ENCODE measurements at regions of chr5 and their contacts with region 1.

Region 1: GRCh38 chr5:66122379-66123034 is 21.6 kb upstream of the SREK1 start:
- DNase-seq: peak; percentile 59
- ATAC-seq: no peak
- H3K4me3 ChIP-seq: no peak overlapping the region
- H3K27ac ChIP-seq: no peak overlapping the region
- H3K4me1 ChIP-seq: no peaks in the 10 kb centered on the region
- H3K27me3 ChIP-seq: no peaks in the 10 kb centered on the region
- CTCF ChIP-seq: no peak
- POLR2A ChIP-seq: no peak
- RAD21 ChIP-seq: no peak

Region 2: GRCh38 chr5:66134407-66134861 is 11.9 kb after region 1 on chr5:
- CTCF ChIA-PET with region 1: no interaction called
- POLR2A ChIA-PET with region 1: interaction called, 18 read pairs
- dilution Hi-C with region 1: no loop called
- in situ Hi-C with region 1: no loop called
- intact Hi-C with region 1: no loop called
- DNase-seq: peak; percentile 9
- ATAC-seq: no peak; the same call in 1 of the 2 replicates
- H3K4me3 ChIP-seq: no peak overlapping the region
- H3K27ac ChIP-seq: no peak overlapping the region
- H3K4me1 ChIP-seq: no peaks in the 10 kb centered on the region
- H3K27me3 ChIP-seq: no peaks in the 10 kb centered on the region
- CTCF ChIP-seq: no peak
- POLR2A ChIP-seq: no peak
- RAD21 ChIP-seq: no peak